ENCODE measurements at regions of chr10 and their contacts with region 1.

Region 1: GRCh38 chr10:6416892-6417512 is 163.1 kb downstream of the PRKCQ start:
- DNase-seq: no peak
- H3K4me3 ChIP-seq: no peak overlapping the region
- H3K27ac ChIP-seq: no peak overlapping the region
- H3K4me1 ChIP-seq: no peaks in the 10 kb centered on the region
- H3K27me3 ChIP-seq: no peaks in the 10 kb centered on the region
- CTCF ChIP-seq: peak; percentile 56

Region 2: DNA sequence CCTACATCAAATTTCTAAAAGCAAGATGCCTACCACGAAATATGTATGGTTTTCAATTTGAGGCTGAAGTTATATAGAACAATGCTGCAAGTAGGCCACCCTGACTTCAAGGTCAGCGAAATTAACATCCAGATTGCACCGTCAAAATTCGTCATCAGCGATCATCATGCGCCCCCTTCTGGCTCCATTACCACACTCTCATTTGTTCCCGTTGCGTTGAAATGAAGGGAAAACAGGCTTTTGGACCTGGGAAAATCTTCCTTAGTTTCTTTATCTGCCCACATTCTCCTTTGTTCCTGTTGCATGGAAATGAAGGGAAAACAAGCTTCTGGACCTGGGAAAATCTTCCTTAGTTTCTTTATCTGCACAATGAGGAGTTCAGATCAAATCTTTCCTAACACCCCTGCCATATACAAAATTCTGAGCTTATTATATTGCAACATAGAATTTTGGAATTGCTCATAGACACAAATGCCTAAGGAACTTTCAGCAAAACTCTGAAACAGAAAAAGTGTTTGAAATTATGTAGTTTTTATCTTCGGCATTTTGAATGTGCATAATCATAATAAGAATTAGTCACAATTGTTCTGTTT is 261.3 kb after region 1 on chr10:
- intact Hi-C with region 1: loop called (anchors 5 kb)
- DNase-seq: peak; percentile 62
- H3K4me3 ChIP-seq: no peak overlapping the region
- H3K27ac ChIP-seq: no peak overlapping the region
- H3K4me1 ChIP-seq: no peaks in the 10 kb centered on the region
- H3K27me3 ChIP-seq: no peaks in the 10 kb centered on the region
- CTCF ChIP-seq: peak; percentile 66

Measured in colonic mucosa (tissue), 4 donors.